Lower leg skin (tissue), 4 donors: ENCODE measurements at regions of chr1 and their contacts with region 1.

Region 1: GRCh38 chr1:66242646-66243547 is 291.1 kb upstream of the SGIP1 start:
- DNase-seq: peak; percentile 74 to 95
- H3K4me3 ChIP-seq: no peak overlapping the region
- CTCF ChIP-seq: peak in 1 of 3 donors; percentile 91
- POLR2A ChIP-seq: no peak

Region 2: DNA sequence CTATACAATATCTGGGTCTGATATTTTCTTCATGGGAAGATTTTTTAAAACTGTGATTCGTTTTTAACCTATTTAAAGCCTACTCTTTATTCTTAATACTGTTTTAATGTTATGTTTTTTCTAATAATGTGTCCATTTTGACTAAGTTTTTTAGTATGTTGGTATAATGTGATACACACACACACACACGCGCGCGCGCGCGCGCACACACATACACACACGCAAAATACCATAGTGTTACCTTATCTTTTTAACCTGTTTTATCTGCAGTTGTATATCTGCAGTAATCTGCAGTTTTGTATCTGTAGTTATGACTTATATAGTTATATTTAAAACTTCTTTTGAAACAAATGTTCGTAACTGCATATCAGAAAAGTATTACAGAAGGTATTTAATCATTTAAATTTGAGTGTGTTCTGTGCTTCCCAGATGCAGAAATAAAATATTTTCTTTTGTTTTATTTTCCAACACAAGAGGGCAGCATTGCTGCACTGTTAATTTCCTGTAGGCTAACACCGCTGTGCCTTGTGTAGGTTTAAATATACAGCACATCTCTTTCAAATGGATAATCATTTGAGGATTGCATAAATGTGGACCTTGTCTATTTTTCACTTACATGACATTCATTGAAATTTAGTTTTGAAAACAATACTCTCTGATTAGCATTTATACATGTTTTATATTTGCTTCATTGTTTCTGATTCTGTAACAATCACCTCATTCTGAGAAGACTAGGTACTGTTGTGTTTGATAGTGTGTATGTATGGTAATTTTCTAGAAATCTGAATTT is 284.1 kb before region 1 on chr1:
- intact Hi-C with region 1: loop called (anchors 5 kb)
- DNase-seq: no peak
- H3K4me3 ChIP-seq: no peak overlapping the region
- CTCF ChIP-seq: no peak
- POLR2A ChIP-seq: no peak

Region 3: DNA sequence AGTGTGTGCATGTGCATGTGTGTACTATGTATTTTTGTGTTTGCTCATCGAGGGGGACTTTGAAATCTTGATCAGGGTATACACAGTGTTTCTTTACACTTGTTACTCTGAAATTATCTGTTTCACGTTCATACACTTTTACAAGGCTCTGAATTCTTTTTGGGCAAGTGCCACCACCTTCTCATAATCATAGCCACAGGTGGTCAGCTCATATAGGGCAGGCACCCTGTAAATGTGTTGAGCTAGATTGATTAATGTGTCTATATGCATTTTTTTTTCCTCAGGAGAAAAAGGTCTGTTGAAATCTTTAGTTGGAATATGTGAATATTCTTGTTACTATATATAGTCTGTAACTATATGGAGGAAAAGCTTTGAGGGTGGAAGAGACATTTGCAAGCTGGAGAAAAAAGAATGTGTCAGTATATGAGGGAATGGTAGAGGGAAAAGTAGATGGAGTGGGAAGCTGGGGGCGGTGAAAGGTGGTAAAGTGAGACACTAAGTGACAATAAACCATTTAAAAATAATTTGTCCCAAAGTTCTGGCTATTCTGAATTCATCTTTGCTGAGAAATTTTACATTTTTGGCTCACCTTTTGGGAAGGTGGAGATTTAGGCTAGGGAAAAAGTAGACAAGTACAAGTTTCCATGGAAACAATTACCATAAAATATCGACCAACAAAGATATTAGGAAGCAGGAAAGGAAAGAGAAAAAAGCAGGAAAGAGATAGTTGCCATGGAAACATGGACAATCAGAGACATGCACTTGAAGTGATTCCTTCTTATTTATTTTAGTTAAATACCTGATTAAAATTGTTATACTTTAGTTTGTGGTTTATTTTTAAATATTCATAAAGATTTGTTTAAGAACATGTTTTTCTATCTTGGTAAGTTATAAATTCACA is 172.7 kb before region 1 on chr1:
- intact Hi-C with region 1: no loop called
- DNase-seq: no peak
- H3K4me3 ChIP-seq: no peak overlapping the region
- CTCF ChIP-seq: no peak
- POLR2A ChIP-seq: no peak

Region 4: GRCh38 chr1:66271216-66271903 is 28.5 kb after region 1 on chr1:
- intact Hi-C with region 1: no loop called
- DNase-seq: peak; percentile 90 to 94
- H3K4me3 ChIP-seq: no peak overlapping the region
- CTCF ChIP-seq: no peak
- POLR2A ChIP-seq: no peak

Region 5: DNA sequence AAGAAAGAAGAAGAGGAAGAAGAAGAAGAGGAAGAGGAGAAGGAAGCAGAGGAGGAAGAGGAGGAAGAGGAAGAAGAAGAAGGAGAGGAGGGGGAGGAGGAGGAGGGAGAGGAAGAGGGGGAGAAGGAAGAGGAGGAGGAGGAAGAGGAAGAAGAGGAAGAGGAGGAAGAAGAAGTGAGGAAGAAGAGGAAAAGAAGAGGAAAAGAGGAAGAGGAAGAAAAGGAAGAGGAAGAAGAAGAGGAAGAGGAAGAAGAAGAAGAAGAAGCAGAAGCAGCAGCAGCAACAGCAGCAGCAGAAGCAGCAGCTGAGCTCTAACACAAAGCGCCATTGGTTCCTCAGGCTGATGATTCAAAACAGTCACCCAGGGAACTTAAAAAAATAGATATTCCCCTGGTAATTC is 647.7 kb after region 1 on chr1:
- intact Hi-C with region 1: no loop called
- DNase-seq: no peak
- H3K4me3 ChIP-seq: no peak overlapping the region
- CTCF ChIP-seq: no peak
- POLR2A ChIP-seq: no peak